A549 (cell line): ENCODE measurements at regions of chr1 and their contacts with region 1.

Region 1: DNA sequence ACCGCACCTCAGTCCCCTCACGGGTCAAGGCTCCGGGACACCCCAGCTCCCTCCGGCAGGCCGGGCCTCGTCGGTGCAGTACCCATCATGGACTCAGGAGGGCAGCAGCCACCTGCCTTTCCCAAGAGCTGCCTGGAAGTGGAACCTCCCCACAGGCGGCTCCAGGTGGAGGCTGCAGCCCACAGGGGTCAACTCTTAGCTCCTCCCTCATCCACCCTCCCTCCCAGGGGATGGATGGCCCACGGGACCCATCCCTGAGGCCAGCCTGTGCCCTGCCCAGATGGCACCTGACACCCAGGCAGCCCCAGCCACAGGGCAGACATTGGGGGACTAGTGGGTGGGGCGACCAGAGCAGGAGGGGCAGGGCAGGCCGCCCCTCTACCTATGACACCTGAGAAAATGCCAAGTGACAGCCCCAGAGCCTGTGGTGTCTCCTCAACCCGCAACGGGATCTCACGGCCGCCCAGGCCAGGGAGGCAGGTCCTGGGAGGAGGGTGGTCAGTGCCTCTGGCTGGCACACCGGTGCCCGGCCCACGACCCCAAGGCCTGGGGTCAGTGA is 1.2 kb upstream of the ARHGEF16 start:
- DNase-seq: peak; percentile 68 to 77
- ATAC-seq: peak; percentile 78 to 87
- H3K4me3 ChIP-seq: no peak overlapping the region
- H3K27ac ChIP-seq: peak overlapping the region in 1 of 2 experiments; percentile 92; a peak in 2 of 6 replicates
- H3K4me1 ChIP-seq: peaks cover 9% of the 10 kb centered on the region; the same call in 1 of the 3 replicates
- CTCF ChIP-seq: peak; percentile 69
- EP300 ChIP-seq: no peak
- POLR2A ChIP-seq: no peak
- RAD21 ChIP-seq: peak; percentile 86 to 92

Region 2: GRCh38 chr1:3441410-3441847 is 11.9 kb before region 1 on chr1:
- CTCF ChIA-PET with region 1: interaction called, 14 read pairs
- POLR2A ChIA-PET with region 1: no interaction called
- DNase-seq: no peak
- ATAC-seq: no peak
- H3K4me3 ChIP-seq: no peak overlapping the region
- H3K27ac ChIP-seq: no peak overlapping the region
- H3K4me1 ChIP-seq: no peaks in the 10 kb centered on the region
- CTCF ChIP-seq: no peak
- EP300 ChIP-seq: no peak
- POLR2A ChIP-seq: no peak
- RAD21 ChIP-seq: no peak

Region 3: GRCh38 chr1:3471302-3472087 is 18.2 kb after region 1 on chr1:
- CTCF ChIA-PET with region 1: interaction called, 69 read pairs
- POLR2A ChIA-PET with region 1: interaction called, 3 read pairs
- DNase-seq: peak; percentile 28 to 52
- ATAC-seq: peak; percentile 62 to 78; a peak in 5 of 6 replicates
- H3K4me3 ChIP-seq: no peak overlapping the region
- H3K27ac ChIP-seq: peak overlapping the region; percentile 60 to 85; a peak in 5 of 6 replicates
- H3K4me1 ChIP-seq: peaks cover 12% of the 10 kb centered on the region
- CTCF ChIP-seq: peak; percentile 33
- EP300 ChIP-seq: no peak
- POLR2A ChIP-seq: no peak
- RAD21 ChIP-seq: peak in 1 of 2 experiments; percentile 35; a peak in 2 of 5 replicates

Region 4: GRCh38 chr1:3491291-3492246 is 38.3 kb after region 1 on chr1:
- CTCF ChIA-PET with region 1: interaction called, 77 read pairs
- POLR2A ChIA-PET with region 1: no interaction called
- DNase-seq: peak; percentile 39 to 52
- ATAC-seq: peak; percentile 81 to 91
- H3K4me3 ChIP-seq: no peak overlapping the region
- H3K27ac ChIP-seq: 0 out of 6 replicates have a peak overlapping the region, but pooled peaks of 1 of the 2 experiments have one; percentile 9
- H3K4me1 ChIP-seq: peaks cover 3% of the 10 kb centered on the region; the same call in 1 of the 3 replicates
- CTCF ChIP-seq: peak; percentile 76
- EP300 ChIP-seq: no peak
- POLR2A ChIP-seq: no peak
- RAD21 ChIP-seq: peak; percentile 71 to 84

Region 5: DNA sequence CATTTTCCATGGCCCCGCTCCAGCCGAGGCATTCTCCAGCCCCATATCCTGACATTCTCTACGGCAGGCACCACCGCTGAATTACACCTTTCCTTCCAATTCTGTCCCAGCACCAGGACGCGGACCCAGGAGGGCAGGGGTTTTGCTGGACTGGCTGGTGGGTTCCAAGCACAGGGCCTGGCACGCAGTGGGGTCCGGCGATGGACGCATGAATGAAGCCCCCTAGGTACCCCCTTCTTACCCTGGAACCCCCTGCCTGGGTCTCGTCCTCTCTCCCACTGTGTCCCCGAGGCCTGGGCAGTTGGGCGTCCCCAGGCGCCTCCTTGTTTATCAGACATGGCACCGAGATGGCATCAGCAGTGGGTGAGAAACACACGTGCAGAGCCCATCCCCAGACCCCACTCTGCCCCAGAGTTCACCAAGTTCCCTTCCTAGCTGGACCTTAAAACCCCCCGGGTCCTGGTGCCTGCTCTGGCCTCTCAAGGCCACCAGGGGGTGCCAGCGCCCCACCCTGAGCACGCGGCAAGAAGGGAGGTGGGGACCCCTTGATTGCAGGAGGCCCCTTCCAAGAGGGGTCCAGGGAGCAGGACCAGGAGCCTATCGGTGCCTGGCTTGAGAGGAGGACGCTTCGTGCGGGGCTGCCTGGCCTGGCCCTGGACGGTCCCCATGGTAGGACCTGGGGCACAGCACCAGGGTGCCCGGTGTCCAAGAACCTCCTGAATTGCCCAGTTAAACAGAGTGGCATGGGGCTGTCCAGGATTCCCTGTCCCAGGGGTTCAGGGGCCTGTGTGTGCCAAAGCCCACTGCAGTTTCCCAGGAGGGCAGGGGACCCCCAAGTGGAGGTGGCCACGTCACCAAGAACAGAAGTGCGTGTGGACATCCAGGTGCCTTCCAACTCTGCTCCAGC is 111.9 kb after region 1 on chr1:
- CTCF ChIA-PET with region 1: interaction called, 10 read pairs
- POLR2A ChIA-PET with region 1: no interaction called
- DNase-seq: peak in 1 of 2 experiments; percentile 73
- ATAC-seq: peak in 1 of 2 experiments; percentile 80; a peak in 3 of 6 replicates
- H3K4me3 ChIP-seq: no peak overlapping the region
- H3K27ac ChIP-seq: no peak overlapping the region
- H3K4me1 ChIP-seq: no peaks in the 10 kb centered on the region
- CTCF ChIP-seq: peak; percentile 72
- EP300 ChIP-seq: no peak
- POLR2A ChIP-seq: no peak
- RAD21 ChIP-seq: peak; percentile 84 to 85

Region 6: DNA sequence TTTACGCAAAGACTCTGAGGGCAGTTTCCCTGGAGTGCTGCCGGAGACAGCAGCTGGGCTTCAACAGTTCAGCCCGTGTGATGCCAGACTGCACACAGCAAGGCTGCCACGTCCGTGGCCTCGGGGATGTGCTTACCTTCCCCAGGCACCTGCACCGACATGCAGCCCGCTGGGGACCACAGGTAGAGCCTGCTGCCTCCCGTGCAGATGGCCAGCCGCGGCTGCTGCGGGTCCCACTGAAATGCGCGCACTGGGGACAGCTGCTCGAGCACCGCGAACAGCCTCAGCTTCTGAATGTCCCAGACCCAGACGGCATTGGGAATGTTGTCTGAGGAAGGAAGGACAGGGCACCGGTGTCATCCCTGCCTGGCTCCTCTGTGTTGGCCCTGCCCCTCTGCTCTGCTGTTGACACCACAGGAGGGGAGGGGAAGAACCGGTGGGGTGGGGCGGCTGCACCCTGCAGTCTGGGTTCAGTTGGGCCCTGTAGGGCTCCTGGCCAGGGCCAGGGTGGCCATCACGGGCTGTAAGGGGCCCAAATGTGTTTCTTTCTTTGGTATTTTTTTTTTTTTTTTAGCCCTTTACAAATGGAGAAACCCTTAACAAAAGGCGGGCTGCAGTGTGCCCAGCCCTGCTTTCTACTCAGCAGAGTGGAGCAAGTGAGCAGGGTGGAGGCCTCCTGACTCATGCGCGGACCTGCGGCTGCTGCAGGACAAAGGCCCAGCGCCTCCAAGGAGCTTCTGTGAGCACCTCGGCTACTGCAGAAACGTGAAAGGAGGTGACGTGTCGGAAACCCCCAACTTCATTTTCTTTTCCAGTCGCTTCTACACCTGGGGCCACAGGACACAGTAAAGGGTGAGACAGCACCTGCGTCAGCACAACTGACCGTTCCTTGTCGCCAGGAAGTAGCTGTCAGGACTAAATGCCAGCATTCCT is 178.3 kb after region 1 on chr1:
- CTCF ChIA-PET with region 1: interaction called, 16 read pairs
- POLR2A ChIA-PET with region 1: no interaction called
- DNase-seq: no peak
- ATAC-seq: no peak; a peak in 1 of 6 replicates
- H3K4me3 ChIP-seq: no peak overlapping the region
- H3K27ac ChIP-seq: no peak overlapping the region
- H3K4me1 ChIP-seq: no peaks in the 10 kb centered on the region
- CTCF ChIP-seq: no peak
- EP300 ChIP-seq: no peak
- POLR2A ChIP-seq: no peak
- RAD21 ChIP-seq: no peak